HEK293 (cell line): ENCODE measurements at regions of chr2 and their contacts with region 1.

Region 1: DNA sequence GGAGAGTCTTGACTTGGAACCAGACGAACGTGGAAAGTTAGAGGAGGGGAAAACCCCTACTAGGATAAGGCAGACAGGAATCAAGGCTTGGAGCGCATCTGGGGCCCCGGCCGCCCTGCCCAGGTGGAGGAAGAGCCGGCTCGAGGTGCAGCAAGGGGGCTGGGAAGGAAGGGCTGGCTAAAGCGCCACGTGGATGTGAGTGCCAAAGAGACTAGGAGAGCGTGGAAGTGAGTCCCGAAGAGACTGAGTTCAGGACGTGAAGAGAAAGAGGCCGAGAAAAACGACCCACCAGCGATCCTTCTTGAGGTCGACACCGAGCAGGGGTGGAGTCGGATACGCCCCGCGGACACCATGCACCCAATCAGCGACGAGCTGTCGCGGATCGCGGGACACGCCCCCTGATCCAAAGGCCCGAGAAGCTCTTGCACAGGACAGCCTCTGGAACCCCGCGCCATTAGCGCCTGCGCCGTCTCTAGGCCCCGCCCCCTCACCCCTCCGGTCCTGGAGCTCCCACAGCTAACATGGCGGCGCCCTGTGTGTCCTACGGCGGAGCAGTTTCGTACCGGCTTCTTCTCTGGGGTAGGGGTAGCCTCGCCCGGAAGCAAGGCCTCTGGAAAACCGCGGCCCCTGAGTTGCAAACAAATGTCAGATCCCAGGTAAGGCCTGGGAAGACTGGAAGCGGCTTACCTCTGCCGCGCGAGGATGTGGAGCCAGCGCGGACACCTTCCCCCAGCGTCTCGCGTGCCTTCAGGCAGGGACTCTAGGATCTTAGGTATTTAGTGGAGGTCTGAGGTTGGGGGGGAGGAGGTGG is at the start of gene MRPS9:
- H3K4me3 ChIP-seq: peak within 1 kb of the TSS; percentile 92
- H3K27ac ChIP-seq: peak within 1 kb of the TSS; percentile 86
- H3K4me1 ChIP-seq: peaks cover 9% of the 10 kb centered on the region; the same call in 1 of the 2 replicates
- CTCF ChIP-seq: no peak; the same call in 1 of the 2 replicates

Region 2: GRCh38 chr2:104862058-104862941 is 175.5 kb before region 1 on chr2:
- CTCF ChIA-PET with region 1: interaction called, 3 read pairs
- POLR2A ChIA-PET with region 1: interaction called, 11 read pairs
- H3K4me3 ChIP-seq: peak overlapping the region; percentile 51
- H3K27ac ChIP-seq: peak overlapping the region; percentile 51; the same call in 1 of the 2 replicates
- H3K4me1 ChIP-seq: peaks cover 2% of the 10 kb centered on the region; the same call in 1 of the 2 replicates
- CTCF ChIP-seq: no peak

Region 3: DNA sequence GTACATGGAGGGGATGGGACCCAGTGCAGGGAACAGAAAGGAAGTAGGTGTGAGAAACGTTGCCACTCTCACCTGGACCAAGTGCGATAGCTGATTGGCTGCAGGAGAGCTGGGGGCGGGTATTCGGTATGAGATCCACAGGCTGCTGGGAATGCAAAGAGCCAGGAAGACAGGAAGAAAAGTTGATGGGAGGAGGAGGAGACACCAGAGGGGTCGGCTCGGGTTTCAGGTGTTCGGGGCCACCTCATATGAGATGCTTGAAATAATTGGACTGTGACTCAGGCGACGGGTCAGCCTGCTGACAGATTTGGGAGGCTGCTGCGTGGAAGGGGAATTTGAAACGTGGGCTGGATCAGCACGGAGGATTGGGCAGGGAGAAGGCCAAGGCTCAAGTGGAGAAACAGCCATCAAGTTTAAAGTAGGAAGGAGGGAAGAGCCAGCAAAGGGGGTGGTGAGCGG is 65.2 kb after region 1 on chr2:
- CTCF ChIA-PET with region 1: no interaction called
- POLR2A ChIA-PET with region 1: interaction called, 21 read pairs
- H3K4me3 ChIP-seq: no peak overlapping the region
- H3K27ac ChIP-seq: no peak overlapping the region
- H3K4me1 ChIP-seq: no peaks in the 10 kb centered on the region
- CTCF ChIP-seq: no peak